Left cardiac atrium (tissue), 4 donors: ENCODE measurements at regions of chr11 and their contacts with region 1.

Region 1: GRCh38 chr11:19795082-19795481 is 82.4 kb downstream of the NAV2 start:
- DNase-seq: no peak
- ATAC-seq: no peak

Region 2: DNA sequence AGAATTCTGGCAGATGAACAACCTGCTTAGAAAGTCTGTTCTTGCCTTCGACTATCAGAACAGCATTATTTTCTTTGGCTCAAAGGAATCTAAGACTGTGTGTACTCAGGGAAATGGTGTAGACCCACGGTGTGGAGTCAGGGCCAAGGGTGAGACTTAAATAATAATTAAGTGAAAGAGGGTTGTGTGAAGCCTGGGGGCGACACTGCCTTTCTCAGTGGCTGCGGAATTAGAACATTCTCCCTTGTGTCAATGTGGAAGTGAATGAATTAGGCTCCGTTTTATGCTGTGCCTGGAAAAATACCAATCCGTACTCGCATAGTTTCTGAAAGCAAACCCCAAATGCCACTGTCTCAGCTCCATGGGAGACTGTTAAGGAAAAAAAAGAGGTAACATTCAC is 31.8 kb before region 1 on chr11:
- intact Hi-C with region 1: loop called in 1 of 2 experiments (anchors 5 kb)
- DNase-seq: no peak
- ATAC-seq: peak in 1 of 2 donors; percentile 8